AG04450 (cell line): ENCODE measurements at regions of chr1 and their contacts with region 1.

Region 1: GRCh38 chr1:68470388-68470970 is 20.7 kb upstream of the RPE65 start:
- DNase-seq: no peak
- H3K4me3 ChIP-seq: no peak overlapping the region
- H3K27ac ChIP-seq: no peak overlapping the region
- H3K27me3 ChIP-seq: no peaks in the 10 kb centered on the region
- CTCF ChIP-seq: peak; percentile 82

Region 2: DNA sequence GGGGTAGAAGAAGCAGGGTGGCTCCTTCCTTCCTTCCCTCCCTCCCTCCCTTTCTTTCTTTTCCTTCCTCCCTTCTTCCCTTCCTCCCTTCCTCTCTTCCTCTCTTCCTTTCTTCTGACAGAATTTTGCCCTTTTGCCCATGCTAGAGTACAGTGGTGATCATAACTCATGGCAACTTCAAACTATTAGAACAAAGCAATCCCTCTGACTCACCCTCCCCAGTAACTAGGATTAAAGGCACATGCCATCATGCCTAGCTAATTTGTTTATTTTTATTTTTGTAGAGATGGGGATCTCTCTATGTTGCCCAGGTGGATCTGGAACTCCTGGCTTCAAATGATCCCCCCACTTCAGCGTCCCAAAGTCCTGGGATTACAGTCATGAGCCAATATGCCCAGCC is 10.7 kb before region 1 on chr1:
- CTCF ChIA-PET with region 1: interaction called, 24 read pairs
- POLR2A ChIA-PET with region 1: no interaction called
- DNase-seq: no peak
- H3K4me3 ChIP-seq: no peak overlapping the region
- H3K27ac ChIP-seq: no peak overlapping the region
- H3K27me3 ChIP-seq: no peaks in the 10 kb centered on the region
- CTCF ChIP-seq: no peak

Region 3: GRCh38 chr1:68485431-68486022 is 15.0 kb after region 1 on chr1:
- CTCF ChIA-PET with region 1: interaction called, 11 read pairs
- POLR2A ChIA-PET with region 1: no interaction called
- DNase-seq: no peak
- H3K4me3 ChIP-seq: no peak overlapping the region
- H3K27ac ChIP-seq: no peak overlapping the region
- H3K27me3 ChIP-seq: no peaks in the 10 kb centered on the region
- CTCF ChIP-seq: no peak

Region 4: GRCh38 chr1:68725001-68725752 is 254.7 kb after region 1 on chr1:
- CTCF ChIA-PET with region 1: no interaction called
- POLR2A ChIA-PET with region 1: no interaction called
- DNase-seq: no peak
- H3K4me3 ChIP-seq: no peak overlapping the region
- H3K27ac ChIP-seq: no peak overlapping the region
- H3K27me3 ChIP-seq: no peaks in the 10 kb centered on the region
- CTCF ChIP-seq: no peak